Motor neuron (in vitro differentiated cells): ENCODE measurements at regions of chr11 and their contacts with region 1.

Region 1: GRCh38 chr11:14288189-14288935 is 70.6 kb downstream of the RRAS2 start:
- ATAC-seq: peak in 4 of 8 experiments; percentile 27 to 95 (median 80)
- H3K4me3 ChIP-seq: no peak overlapping the region
- H3K27ac ChIP-seq: no peak overlapping the region
- H3K4me1 ChIP-seq: no peaks in the 10 kb centered on the region

Region 2: DNA sequence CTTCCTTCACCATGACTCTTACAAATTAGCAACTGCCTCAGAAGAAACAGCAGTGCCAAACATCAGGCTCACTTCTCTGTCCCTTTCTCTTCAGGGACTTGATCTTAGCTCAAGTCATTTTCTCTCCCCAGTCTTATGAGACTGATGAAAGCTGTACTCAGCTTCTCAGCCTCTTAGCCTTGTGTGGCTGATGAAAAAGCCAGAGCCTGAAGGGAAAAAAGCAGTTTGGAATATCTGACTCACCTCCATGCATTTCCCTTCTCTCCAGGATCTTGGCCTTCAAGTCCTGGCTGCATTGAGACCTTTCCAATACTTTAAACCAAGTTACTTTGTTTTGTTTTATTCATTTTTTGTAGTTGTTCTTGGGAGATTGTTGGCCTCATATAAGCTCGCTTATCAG is 130.0 kb before region 1 on chr11:
- in situ Hi-C with region 1: no loop called
- ATAC-seq: peak in 2 of 8 experiments; percentile 57 to 79
- H3K4me3 ChIP-seq: no peak overlapping the region
- H3K27ac ChIP-seq: no peak overlapping the region
- H3K4me1 ChIP-seq: no peaks in the 10 kb centered on the region

Region 3: GRCh38 chr11:14454861-14455632 is 166.7 kb after region 1 on chr11:
- in situ Hi-C with region 1: loop called in 2 of 9 experiments (anchors 25 kb)
- ATAC-seq: peak in 5 of 8 experiments; percentile 16 to 55 (median 46)
- H3K4me3 ChIP-seq: no peak overlapping the region
- H3K27ac ChIP-seq: no peak overlapping the region
- H3K4me1 ChIP-seq: no peaks in the 10 kb centered on the region